Psoas muscle (tissue), 8 donors: ENCODE measurements at regions of chr14 and their contacts with region 1.

Region 1: GRCh38 chr14:22852940-22853767 is 16.8 kb downstream of the MMP14 start:
- DNase-seq: peak; percentile 88 to 93
- ATAC-seq: peak; percentile 70 to 81 (median 73)
- H3K4me3 ChIP-seq: peak overlapping the region; percentile 68
- H3K27ac ChIP-seq: no peak overlapping the region
- H3K4me1 ChIP-seq: peaks cover 47% of the 10 kb centered on the region
- H3K27me3 ChIP-seq: no peaks in the 10 kb centered on the region
- CTCF ChIP-seq: peak; percentile 89

Region 2: DNA sequence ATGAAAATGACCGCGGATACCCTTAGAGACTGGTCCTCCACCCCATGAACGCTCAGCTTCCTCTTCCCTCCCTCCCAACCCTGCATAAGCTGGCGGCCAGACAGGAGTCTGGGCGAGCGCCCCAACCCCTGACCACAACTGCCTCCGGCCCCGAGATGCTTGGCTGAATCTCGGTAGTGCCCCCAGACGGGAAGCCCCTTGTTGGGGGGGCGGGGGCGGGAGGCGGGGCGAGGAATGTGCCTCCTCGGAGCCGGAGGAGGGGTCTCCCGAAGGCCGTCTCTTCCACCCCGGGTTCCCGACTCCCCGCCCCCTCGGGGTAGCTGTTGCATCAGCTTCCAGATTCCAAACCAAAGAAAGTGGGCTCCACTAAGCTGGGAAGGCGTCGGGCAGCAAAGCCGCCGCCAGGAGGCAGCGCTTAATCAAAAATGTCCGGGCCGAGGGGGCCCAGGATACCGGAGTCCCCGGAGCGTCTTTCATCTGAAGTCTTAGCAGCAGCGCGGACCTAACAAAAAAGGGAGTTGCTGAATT is 30.5 kb before region 1 on chr14:
- intact Hi-C with region 1: loop called (anchors 1 to 2 kb)
- DNase-seq: peak; percentile 81 to 85
- ATAC-seq: peak; percentile 83 to 95 (median 86)
- H3K4me3 ChIP-seq: peak overlapping the region; percentile 41
- H3K27ac ChIP-seq: no peak overlapping the region
- H3K4me1 ChIP-seq: no peaks in the 10 kb centered on the region
- H3K27me3 ChIP-seq: peaks cover 0 to 2% (median 0%) of the 10 kb centered on the region in 3 donors
- CTCF ChIP-seq: peak; percentile 83

Region 3: GRCh38 chr14:22829661-22830442 is 23.3 kb before region 1 on chr14 and contains the start of gene MRPL52:
- intact Hi-C with region 1: loop called in 1 of 2 experiments (anchors 2 kb)
- DNase-seq: peak; percentile 88 to 95
- ATAC-seq: peak; percentile 95 to 100 (median 98)
- H3K4me3 ChIP-seq: peak within 1 kb of the TSS; percentile 90
- H3K27ac ChIP-seq: peak within 1 kb of the TSS; percentile 93
- H3K4me1 ChIP-seq: peaks cover 8% of the 10 kb centered on the region
- H3K27me3 ChIP-seq: no peaks in the 10 kb centered on the region
- CTCF ChIP-seq: no peak
- total RNA-seq, gene MRPL52: 79.1 to 91.2 (median 84.9) TPM

Region 4: GRCh38 chr14:22886500-22887259 is 33.5 kb after region 1 on chr14:
- intact Hi-C with region 1: no loop called
- DNase-seq: peak; percentile 73 to 78
- ATAC-seq: peak; percentile 55 to 75 (median 62)
- H3K4me3 ChIP-seq: peak overlapping the region; percentile 65
- H3K27ac ChIP-seq: no peak overlapping the region
- H3K4me1 ChIP-seq: no peaks in the 10 kb centered on the region
- H3K27me3 ChIP-seq: peaks cover 0 to 26% (median 0%) of the 10 kb centered on the region in 3 donors
- CTCF ChIP-seq: no peak

Region 5: DNA sequence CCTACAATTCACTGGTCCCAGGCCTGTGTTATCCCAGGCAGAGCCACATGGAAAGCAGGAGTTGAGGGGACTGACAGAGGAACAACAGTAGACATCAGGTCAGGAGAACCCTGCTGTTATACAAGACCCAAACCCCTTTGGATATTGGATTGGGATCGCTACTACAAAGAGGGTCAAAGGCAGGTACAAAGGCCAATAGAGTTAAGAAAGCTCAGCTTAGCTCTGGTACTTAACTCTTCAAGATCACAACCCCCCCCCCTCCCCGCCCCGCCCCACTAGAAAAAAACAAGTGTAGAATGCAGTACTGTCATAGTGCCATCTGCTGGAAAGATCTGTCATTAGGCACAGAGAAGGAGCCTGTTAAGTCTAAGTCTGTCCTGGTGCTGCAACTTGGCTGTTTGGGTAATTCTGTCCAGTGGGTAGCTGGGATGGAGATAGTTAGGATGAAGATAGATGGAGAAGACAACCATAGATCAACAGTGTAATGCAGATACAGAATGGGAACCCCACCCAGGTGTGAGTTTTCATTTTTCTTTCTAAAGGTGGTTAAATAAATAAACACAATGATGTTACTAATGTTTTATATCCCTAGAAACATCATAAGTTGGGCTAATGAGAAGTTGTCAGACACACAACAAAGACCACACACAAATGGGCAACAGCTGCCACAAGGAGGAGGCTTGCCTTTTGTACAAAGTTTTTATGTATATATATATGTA is 47.1 kb after region 1 on chr14:
- intact Hi-C with region 1: no loop called
- DNase-seq: no peak
- ATAC-seq: peak; percentile 58 to 79 (median 65)
- H3K4me3 ChIP-seq: no peak overlapping the region
- H3K27ac ChIP-seq: no peak overlapping the region
- H3K4me1 ChIP-seq: no peaks in the 10 kb centered on the region
- H3K27me3 ChIP-seq: no peaks in the 10 kb centered on the region
- CTCF ChIP-seq: peak; percentile 46